Dorsolateral prefrontal cortex (tissue), 120 donors: ENCODE measurements at regions of chr1 and their contacts with region 1.

Region 1: GRCh38 chr1:153763365-153764225 is 11.6 kb upstream of the SLC27A3 start:
- DNase-seq: no peak
- H3K4me3 ChIP-seq: no peak overlapping the region
- H3K27ac ChIP-seq: peak overlapping the region in 53 of 59 donors; percentile 13 to 92 (median 68)
- H3K27me3 ChIP-seq: no peaks in the 10 kb centered on the region
- CTCF ChIP-seq: no peak

Region 2: DNA sequence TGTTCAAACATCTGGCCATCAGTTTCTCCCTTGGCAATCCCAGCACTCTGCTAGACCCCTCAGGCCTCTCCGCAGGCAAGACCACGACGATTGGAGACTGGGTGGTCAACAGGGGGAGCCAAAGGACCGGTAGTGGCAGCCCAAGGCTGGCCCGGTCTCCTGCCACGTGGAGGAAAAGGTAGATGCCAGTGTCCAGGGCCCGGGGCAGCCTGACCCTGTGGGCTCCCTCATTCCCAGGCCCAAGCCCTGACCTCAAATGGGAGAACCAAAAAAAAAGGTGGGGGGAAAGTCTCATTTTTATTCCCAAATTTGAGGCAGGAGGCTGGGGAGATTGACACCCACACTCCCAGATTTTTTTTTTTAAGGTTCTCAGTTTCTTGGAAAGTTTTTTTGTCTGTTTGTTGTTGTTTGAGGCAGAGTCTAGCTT is 252.6 kb before region 1 on chr1:
- intact Hi-C with region 1: loop called (anchors 10 kb)
- DNase-seq: peak; percentile 41 to 83 (median 74)
- H3K4me3 ChIP-seq: no peak overlapping the region
- H3K27ac ChIP-seq: no peak overlapping the region
- H3K27me3 ChIP-seq: no peaks in the 10 kb centered on the region
- CTCF ChIP-seq: peak; percentile 34 to 96 (median 86)